ENCODE measurements at regions of chr7 and their contacts with region 1.

Region 1: DNA sequence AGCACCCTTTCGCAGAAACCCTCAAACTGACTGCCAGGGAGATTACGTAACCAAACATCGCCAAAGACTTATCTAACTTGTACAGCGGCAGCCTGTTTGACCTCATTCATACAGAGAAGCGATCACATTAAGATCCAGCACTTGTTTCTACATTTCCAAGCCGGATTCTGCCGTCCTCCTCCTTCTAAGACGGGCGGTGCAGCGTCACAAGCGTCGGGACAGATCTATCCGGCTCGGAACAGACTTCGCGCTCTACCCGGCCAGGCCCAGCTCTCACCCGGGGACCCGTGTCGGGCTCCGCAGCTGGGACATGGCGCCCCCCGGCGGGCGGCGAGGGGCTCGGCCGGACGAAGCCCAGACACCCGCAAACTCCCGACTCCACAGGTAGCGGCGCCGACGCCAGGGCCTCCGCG is 373 bp downstream of the H2AZ2 start:
- DNase-seq: peak; percentile 86 to 92
- H3K4me3 ChIP-seq: peak overlapping the region; percentile 61
- H3K4me3 Mint-ChIP-seq: peak overlapping the region; percentile 95
- H3K27ac Mint-ChIP-seq: peak overlapping the region; percentile 99
- H3K4me1 ChIP-seq: no peaks in the 10 kb centered on the region
- H3K4me1 Mint-ChIP-seq: peaks cover 10% of the 10 kb centered on the region
- H3K27me3 ChIP-seq: no peaks in the 10 kb centered on the region
- H3K27me3 Mint-ChIP-seq: no peaks in the 10 kb centered on the region
- CTCF ChIP-seq: peak; percentile 87 to 89

Region 2: DNA sequence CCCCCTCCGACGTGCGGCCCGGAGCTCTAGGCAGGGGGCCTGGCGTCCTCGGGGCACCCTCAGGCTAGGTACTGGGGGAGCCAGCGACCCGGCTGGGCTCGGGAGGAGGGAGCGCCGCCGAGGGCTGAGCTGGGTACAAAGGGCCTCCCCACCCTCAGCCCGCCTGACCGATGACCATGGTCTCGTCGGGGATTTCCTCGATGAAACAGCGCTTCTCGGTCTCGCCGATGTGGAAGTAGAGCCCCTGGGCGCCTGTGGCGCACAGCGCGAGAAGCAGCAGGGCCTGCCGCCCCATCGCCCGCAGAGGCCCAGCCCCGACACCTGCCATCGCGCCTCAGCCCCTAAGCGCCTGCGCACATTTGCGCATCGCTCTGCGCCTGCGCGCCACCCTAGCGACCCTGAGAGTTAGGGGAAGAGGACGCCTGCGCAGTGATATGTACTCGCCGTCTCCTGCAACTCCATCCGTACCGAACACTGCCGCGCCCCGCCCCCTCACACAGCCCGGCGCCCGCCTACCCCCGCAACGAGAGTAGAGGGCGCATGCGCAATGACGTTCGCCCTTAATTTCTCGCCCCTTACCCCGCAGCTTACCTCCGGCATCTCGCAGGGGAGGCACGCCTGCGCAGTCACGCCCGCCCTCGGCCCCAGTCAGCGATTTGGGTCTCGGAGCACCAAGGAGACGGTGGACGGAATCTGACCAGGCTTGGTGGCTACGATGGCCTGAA is 265.5 kb before region 1 on chr7 and contains the start of gene TMED4:
- CTCF ChIA-PET with region 1: interaction called, 3 read pairs
- POLR2A ChIA-PET with region 1: no interaction called
- intact Hi-C with region 1: loop called (anchors 2 kb)
- DNase-seq: peak; percentile 99 to 100
- H3K4me3 ChIP-seq: peak within 1 kb of the TSS; percentile 80
- H3K4me3 Mint-ChIP-seq: peak within 1 kb of the TSS; percentile 86
- H3K27ac Mint-ChIP-seq: peak within 1 kb of the TSS; percentile 96
- H3K4me1 ChIP-seq: peaks cover 13% of the 10 kb centered on the region
- H3K4me1 Mint-ChIP-seq: peaks cover 7% of the 10 kb centered on the region
- H3K27me3 ChIP-seq: no peaks in the 10 kb centered on the region
- H3K27me3 Mint-ChIP-seq: no peaks in the 10 kb centered on the region
- CTCF ChIP-seq: no peak
- total RNA-seq, gene TMED4: 93.4 and 96.6 TPM in 2 replicates

Region 3: GRCh38 chr7:44748045-44748947 is 99.2 kb before region 1 on chr7 and contains the start of gene ZMIZ2:
- CTCF ChIA-PET with region 1: no interaction called
- POLR2A ChIA-PET with region 1: no interaction called
- intact Hi-C with region 1: loop called (anchors 2 kb)
- DNase-seq: peak; percentile 92 to 96
- H3K4me3 ChIP-seq: peak within 1 kb of the TSS; percentile 96
- H3K4me3 Mint-ChIP-seq: peak within 1 kb of the TSS; percentile 83
- H3K27ac Mint-ChIP-seq: peak within 1 kb of the TSS; percentile 72
- H3K4me1 ChIP-seq: peaks cover 24% of the 10 kb centered on the region
- H3K4me1 Mint-ChIP-seq: peaks cover 18% of the 10 kb centered on the region
- H3K27me3 ChIP-seq: no peaks in the 10 kb centered on the region
- H3K27me3 Mint-ChIP-seq: no peaks in the 10 kb centered on the region
- CTCF ChIP-seq: no peak
- total RNA-seq, gene ZMIZ2: 69.0 and 72.1 TPM in 2 replicates

Region 4: GRCh38 chr7:44797329-44798251 is 49.9 kb before region 1 on chr7:
- CTCF ChIA-PET with region 1: no interaction called
- POLR2A ChIA-PET with region 1: interaction called, 11 read pairs
- intact Hi-C with region 1: loop called (anchors 1 kb)
- DNase-seq: peak; percentile 90
- H3K4me3 ChIP-seq: peak overlapping the region; percentile 100
- H3K4me3 Mint-ChIP-seq: peak overlapping the region; percentile 97
- H3K27ac Mint-ChIP-seq: peak overlapping the region; percentile 99
- H3K4me1 ChIP-seq: 0 out of 2 replicates have a peak, but pooled peaks cover 10% of the 10 kb centered on the region
- H3K4me1 Mint-ChIP-seq: no peaks in the 10 kb centered on the region
- H3K27me3 ChIP-seq: no peaks in the 10 kb centered on the region
- H3K27me3 Mint-ChIP-seq: no peaks in the 10 kb centered on the region
- CTCF ChIP-seq: peak; percentile 67 to 71

Region 5: DNA sequence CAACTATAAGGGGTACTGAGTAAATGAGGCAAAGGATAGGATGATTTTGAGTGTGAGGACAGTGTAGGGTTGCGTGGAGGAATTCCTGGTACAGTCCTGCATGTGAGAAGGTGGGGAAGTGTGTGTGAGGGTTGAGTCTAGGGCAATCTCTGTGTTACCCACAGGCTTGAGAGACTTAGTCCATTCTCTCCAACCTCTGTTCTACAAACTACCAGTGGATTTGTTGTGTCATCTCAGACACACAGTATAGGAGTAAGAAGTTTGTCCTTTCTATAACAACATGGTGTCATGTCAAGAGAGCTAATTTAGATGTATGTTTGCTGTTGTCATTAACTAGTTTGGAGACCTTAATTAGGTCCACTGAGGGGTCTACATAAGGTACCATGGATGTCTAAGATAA is 25.3 kb after region 1 on chr7:
- CTCF ChIA-PET with region 1: no interaction called
- POLR2A ChIA-PET with region 1: no interaction called
- intact Hi-C with region 1: no loop called
- DNase-seq: no peak
- H3K4me3 ChIP-seq: no peak overlapping the region
- H3K4me3 Mint-ChIP-seq: no peak overlapping the region
- H3K27ac Mint-ChIP-seq: no peak overlapping the region
- H3K4me1 ChIP-seq: no peaks in the 10 kb centered on the region
- H3K4me1 Mint-ChIP-seq: peaks cover 6% of the 10 kb centered on the region
- H3K27me3 ChIP-seq: no peaks in the 10 kb centered on the region
- H3K27me3 Mint-ChIP-seq: no peaks in the 10 kb centered on the region
- CTCF ChIP-seq: no peak

Region 6: DNA sequence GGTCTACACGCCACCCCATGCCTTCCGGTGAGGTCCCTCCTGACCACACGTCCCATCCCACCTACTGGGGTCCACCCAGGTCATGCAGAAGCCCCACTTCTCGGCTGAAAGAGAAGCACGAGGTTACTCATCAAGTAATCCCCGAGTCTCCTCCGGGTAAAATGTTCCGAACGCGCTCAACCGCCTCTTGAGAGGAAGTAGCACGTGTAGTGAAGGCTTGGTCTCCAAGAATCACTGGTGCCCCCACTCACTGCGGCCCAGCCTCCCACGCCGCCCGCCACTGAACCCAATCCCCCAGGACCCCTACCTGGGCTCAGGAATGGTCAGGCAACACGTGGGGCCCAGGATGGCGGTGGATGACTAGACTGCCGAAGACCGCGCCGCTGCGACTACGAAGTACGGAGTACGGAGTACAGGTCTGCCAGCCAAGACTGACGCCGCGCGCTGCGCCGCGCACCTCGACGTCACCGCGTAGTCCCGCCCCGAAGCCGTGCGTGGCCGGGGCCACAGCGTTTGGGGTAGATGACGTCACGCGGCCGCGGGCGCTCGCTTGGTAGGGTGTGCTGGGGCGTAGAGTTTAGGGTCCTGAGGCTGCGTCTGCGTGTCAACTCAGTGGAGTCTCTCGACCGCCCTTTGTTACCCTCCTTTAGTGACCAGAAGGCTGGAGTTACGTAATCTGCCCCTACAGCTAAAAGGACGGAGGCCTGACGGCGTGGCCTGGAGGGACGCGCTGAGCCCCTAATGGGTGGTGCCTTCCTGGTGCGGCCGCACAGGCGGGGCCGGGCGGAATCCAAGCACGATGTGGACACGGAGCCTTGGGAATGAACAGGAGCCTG is 138.9 kb after region 1 on chr7:
- CTCF ChIA-PET with region 1: no interaction called
- POLR2A ChIA-PET with region 1: no interaction called
- intact Hi-C with region 1: loop called (anchors 2 kb)
- DNase-seq: peak; percentile 97
- H3K4me3 ChIP-seq: peak overlapping the region; percentile 80
- H3K4me3 Mint-ChIP-seq: peak overlapping the region; percentile 97
- H3K27ac Mint-ChIP-seq: peak overlapping the region; percentile 100
- H3K4me1 ChIP-seq: peaks cover 11% of the 10 kb centered on the region
- H3K4me1 Mint-ChIP-seq: peaks cover 17% of the 10 kb centered on the region
- H3K27me3 ChIP-seq: no peaks in the 10 kb centered on the region
- H3K27me3 Mint-ChIP-seq: no peaks in the 10 kb centered on the region
- CTCF ChIP-seq: no peak

Region 7: DNA sequence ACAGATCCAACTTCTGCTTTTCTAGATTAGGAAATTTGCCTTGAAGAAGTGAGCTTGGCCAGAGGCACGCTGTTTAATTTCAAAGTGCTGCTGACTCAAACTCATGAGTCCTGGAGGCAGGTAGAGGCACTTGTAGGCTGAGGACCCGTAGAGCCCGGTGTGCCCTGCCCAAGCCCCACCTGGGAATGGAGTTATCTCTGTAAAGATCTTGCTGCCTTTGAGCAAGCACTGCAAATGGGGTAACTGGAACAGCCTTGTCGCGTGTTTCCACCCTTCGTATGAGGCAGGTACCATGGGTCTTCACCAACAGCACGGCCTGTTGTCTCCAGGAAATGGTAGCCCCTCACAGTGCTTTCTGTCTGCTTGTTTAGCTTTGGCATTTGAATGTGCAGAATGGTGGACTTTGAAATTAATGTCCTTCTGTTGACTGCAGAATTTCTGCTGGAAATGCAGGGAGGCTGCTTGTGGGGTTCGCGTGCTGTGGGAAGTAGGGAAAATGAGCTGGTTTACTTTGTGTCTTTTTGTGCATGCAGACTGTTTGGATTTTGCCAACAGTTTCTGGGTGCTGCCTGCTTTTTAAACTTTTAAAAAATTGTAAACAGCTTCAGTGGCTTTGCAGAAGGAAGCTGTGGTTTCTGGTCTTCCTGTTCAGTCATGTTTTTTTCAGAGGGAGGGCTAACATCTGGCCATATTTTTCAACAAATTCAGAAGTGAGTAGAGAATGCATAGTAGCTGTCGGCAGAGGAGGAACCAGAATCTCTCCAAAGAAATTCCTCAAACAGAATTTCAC is 179.7 kb after region 1 on chr7:
- CTCF ChIA-PET with region 1: no interaction called
- POLR2A ChIA-PET with region 1: no interaction called
- intact Hi-C with region 1: no loop called
- DNase-seq: no peak
- H3K4me3 ChIP-seq: no peak overlapping the region
- H3K4me3 Mint-ChIP-seq: no peak overlapping the region
- H3K27ac Mint-ChIP-seq: no peak overlapping the region
- H3K4me1 ChIP-seq: no peaks in the 10 kb centered on the region
- H3K4me1 Mint-ChIP-seq: no peaks in the 10 kb centered on the region
- H3K27me3 ChIP-seq: no peaks in the 10 kb centered on the region
- H3K27me3 Mint-ChIP-seq: no peaks in the 10 kb centered on the region
- CTCF ChIP-seq: no peak

Measured in Caco-2 (cell line).